ENCODE measurements at regions of chr10 and their contacts with region 1.

Region 1: GRCh38 chr10:22003079-22003913 is at the start of gene DNAJC1:
- DNase-seq: peak; percentile 95
- H3K4me3 ChIP-seq: peak within 1 kb of the TSS; percentile 47 to 93 (median 86)
- H3K27ac ChIP-seq: peak within 1 kb of the TSS; percentile 86
- H3K4me1 ChIP-seq: peaks cover 10% of the 10 kb centered on the region
- H3K27me3 ChIP-seq: peaks cover 3 to 27% of the 10 kb centered on the region in 2 experiments
- CTCF ChIP-seq: no peak
- POLR2A ChIP-seq: peak; percentile 80
- total RNA-seq, gene DNAJC1: 19.7 and 22.5 TPM in 2 replicates

Region 2: DNA sequence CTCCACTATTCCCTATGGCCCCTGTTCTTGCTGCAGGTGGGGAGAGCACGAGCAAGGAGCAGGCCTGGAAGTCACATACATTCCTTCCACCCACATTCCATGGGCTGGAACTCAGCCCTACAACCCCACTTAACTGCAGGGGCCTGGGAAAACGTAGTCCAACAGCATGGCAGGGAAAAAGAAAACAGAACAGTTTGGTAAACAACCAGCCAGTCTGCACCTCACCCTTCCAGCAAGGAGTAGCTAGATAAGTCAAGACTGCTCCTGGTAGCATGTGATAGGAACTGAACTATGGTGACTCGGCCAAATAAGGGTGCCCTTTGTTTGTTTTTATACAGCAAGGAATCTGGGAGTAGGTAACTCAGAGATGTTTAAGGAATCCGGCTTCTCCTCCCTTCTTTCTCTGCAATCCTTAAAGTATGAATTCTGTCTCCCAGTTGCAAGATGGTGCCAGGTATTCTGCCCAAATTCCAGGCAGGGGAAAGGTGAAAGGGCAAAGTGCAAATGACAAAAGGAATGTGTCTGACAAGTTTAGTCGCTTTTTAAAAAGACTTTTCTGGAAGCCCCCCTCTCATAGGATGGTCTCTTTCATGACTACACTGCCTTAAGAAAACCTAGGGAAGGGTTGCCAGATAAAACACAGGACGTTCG is 794.5 kb before region 1 on chr10:
- CTCF ChIA-PET with region 1: no interaction called
- POLR2A ChIA-PET with region 1: no interaction called
- dilution Hi-C with region 1: no loop called
- intact Hi-C with region 1: no loop called
- DNase-seq: no peak
- H3K4me3 ChIP-seq: no peak overlapping the region
- H3K27ac ChIP-seq: no peak overlapping the region
- H3K4me1 ChIP-seq: no peaks in the 10 kb centered on the region
- H3K27me3 ChIP-seq: peaks cover 0 to 5% of the 10 kb centered on the region in 2 experiments
- CTCF ChIP-seq: no peak
- POLR2A ChIP-seq: no peak

Region 3: GRCh38 chr10:21516242-21517131 is 486.8 kb before region 1 on chr10:
- CTCF ChIA-PET with region 1: no interaction called
- POLR2A ChIA-PET with region 1: no interaction called
- dilution Hi-C with region 1: no loop called
- intact Hi-C with region 1: loop called (anchors 5 kb)
- DNase-seq: peak; percentile 53
- H3K4me3 ChIP-seq: peak overlapping the region; percentile 31 to 63 (median 40)
- H3K27ac ChIP-seq: no peak overlapping the region
- H3K4me1 ChIP-seq: peaks cover 26% of the 10 kb centered on the region
- H3K27me3 ChIP-seq: no peaks in the 10 kb centered on the region
- CTCF ChIP-seq: no peak
- POLR2A ChIP-seq: no peak

Region 4: DNA sequence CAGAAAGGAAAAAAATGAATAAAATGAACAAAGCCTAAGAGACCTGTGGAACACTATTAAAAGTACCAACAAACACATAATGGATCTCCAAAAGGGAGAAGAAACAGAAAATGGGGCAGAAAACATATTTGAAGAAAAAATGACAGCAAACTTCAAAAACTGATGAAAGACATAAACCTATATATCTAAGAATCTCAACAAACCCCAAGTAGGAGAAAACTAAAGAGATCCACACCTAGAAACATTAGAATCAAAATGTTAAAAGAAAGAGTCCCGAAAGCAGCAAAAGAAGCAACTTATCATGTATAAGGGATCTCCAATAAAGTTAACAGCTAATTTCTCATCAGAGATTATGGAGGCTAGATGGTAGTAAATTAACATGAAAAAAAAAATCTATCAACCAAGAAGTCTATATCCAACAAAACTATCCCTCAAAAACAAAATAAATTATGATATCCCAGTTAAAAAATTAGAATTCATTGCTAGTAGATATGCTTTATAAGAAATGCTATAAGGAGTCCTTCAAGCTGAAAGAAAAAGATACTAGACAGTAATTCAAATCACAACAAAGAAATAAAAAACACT is 67.8 kb before region 1 on chr10:
- CTCF ChIA-PET with region 1: no interaction called
- POLR2A ChIA-PET with region 1: no interaction called
- dilution Hi-C with region 1: no loop called
- intact Hi-C with region 1: no loop called
- DNase-seq: no peak
- H3K4me3 ChIP-seq: no peak overlapping the region
- H3K27ac ChIP-seq: no peak overlapping the region
- H3K4me1 ChIP-seq: no peaks in the 10 kb centered on the region
- H3K27me3 ChIP-seq: no peaks in the 10 kb centered on the region
- CTCF ChIP-seq: no peak
- POLR2A ChIP-seq: no peak

Region 5: DNA sequence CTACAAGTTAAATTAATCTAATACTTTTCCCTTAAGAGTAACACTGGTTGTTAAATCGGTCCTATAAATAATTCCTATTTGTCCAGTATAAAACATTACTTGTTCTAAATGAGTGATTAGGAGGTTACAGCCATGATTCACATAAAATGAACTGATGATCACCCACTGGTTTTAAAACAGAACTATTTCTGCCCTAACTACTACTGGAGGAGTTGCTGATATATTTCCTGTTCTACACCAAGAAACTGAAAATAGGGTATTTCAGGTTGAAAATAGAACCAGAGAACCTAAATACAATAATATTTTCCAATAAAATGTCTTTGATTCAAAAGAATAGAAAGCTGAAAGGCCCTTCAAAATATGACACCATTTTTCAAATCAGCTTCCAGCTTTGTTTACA is 30.7 kb before region 1 on chr10:
- CTCF ChIA-PET with region 1: no interaction called
- POLR2A ChIA-PET with region 1: no interaction called
- dilution Hi-C with region 1: no loop called
- intact Hi-C with region 1: no loop called
- DNase-seq: no peak
- H3K4me3 ChIP-seq: no peak overlapping the region
- H3K27ac ChIP-seq: no peak overlapping the region
- H3K4me1 ChIP-seq: no peaks in the 10 kb centered on the region
- H3K27me3 ChIP-seq: no peaks in the 10 kb centered on the region
- CTCF ChIP-seq: no peak
- POLR2A ChIP-seq: no peak

Region 6: GRCh38 chr10:22228943-22229801 is 225.9 kb after region 1 on chr10:
- CTCF ChIA-PET with region 1: interaction called, 4 read pairs
- POLR2A ChIA-PET with region 1: no interaction called
- dilution Hi-C with region 1: no loop called
- intact Hi-C with region 1: loop called (anchors 1 kb)
- DNase-seq: peak; percentile 94
- H3K4me3 ChIP-seq: peak overlapping the region; percentile 69 to 97 (median 96)
- H3K27ac ChIP-seq: peak overlapping the region; percentile 49
- H3K4me1 ChIP-seq: peaks cover 9% of the 10 kb centered on the region
- H3K27me3 ChIP-seq: no peaks in the 10 kb centered on the region
- CTCF ChIP-seq: no peak
- POLR2A ChIP-seq: peak; percentile 30

Region 7: DNA sequence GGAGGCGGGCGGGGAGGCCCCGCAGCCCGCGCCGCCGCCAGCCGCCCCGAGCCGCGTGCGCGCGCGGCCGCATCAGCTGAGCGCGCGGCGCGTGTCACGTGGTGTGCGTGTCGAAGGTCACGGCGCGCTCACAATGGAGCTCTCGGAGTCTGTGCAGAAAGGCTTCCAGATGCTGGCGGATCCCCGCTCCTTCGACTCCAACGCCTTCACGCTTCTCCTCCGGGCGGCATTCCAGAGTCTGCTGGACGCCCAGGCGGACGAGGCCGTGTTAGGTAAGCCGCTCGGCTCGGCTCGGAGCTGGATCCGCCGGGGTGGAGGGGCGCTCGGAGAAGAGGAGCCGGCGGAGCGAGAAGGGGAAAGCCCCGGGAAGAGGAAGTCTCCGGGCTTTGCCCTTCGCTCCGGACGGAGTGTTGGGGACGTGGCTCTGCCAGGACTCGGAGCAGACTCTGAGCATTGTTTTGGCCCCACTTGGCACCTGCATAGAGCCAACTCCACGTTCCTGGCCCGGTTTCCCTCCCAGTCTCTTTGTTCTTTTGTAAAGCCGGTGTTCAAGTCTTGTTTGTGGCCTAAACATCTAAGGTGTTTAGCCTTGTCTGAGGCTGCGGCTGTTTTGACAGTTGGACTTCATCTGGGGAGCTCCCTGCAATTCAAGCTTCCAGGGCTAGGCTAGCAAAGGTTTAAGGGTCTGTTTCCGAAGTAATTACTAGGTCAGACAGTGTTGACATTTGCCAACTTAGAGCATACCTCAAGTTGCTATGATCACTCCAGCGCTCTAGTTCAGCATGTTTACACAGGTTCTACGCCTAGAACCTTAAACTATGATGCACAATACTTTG is 313.2 kb after region 1 on chr10 and contains the start of gene COMMD3:
- CTCF ChIA-PET with region 1: interaction called, 5 read pairs
- POLR2A ChIA-PET with region 1: interaction called, 3 read pairs
- dilution Hi-C with region 1: no loop called
- intact Hi-C with region 1: loop called (anchors 2 kb)
- DNase-seq: peak; percentile 88
- H3K4me3 ChIP-seq: peak within 1 kb of the TSS; percentile 67 to 93 (median 83)
- H3K27ac ChIP-seq: peak within 1 kb of the TSS; percentile 69
- H3K4me1 ChIP-seq: peaks cover 17% of the 10 kb centered on the region
- H3K27me3 ChIP-seq: no peaks in the 10 kb centered on the region
- CTCF ChIP-seq: no peak
- POLR2A ChIP-seq: peak; percentile 89
- total RNA-seq, gene COMMD3: 48.9 and 49.8 TPM in 2 replicates

Region 8: GRCh38 chr10:22816298-22816653 is 813.0 kb after region 1 on chr10:
- CTCF ChIA-PET with region 1: no interaction called
- POLR2A ChIA-PET with region 1: no interaction called
- dilution Hi-C with region 1: no loop called
- intact Hi-C with region 1: loop called (anchors 2 kb)
- DNase-seq: peak; percentile 93
- H3K4me3 ChIP-seq: no peak overlapping the region
- H3K27ac ChIP-seq: peak overlapping the region; percentile 86
- H3K4me1 ChIP-seq: peaks cover 15% of the 10 kb centered on the region
- H3K27me3 ChIP-seq: no peaks in the 10 kb centered on the region
- CTCF ChIP-seq: no peak
- POLR2A ChIP-seq: no peak

Measured in endothelial cell of umbilical vein (primary cell).